ENCODE measurements at regions of chr7 and their contacts with region 1.

Region 1: DNA sequence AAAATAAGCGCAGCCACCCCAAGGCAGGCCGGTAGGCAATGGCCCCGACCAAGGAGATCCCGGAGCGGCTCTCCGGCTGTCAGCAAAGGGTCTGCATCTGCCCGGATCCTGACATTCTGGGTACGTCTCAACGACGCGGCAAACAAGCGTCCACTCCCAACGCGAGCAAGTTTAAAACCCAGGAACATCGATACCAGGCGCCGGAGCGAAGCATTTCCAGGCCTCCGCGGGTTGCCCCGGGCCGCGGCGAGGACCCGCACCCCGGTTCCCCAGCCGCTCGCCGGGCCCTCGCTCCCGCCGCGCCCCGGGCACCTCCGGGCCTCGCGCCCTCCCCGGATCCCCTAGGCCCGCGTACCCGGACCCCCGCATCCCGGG is 453 bp downstream of the URGCP start:
- DNase-seq: peak; percentile 43 to 52
- H3K4me3 ChIP-seq: peak overlapping the region; percentile 81
- H3K4me3 Mint-ChIP-seq: peak overlapping the region; percentile 79
- H3K27ac Mint-ChIP-seq: peak overlapping the region; percentile 86
- H3K4me1 ChIP-seq: peaks cover 21% of the 10 kb centered on the region
- H3K4me1 Mint-ChIP-seq: peaks cover 26% of the 10 kb centered on the region
- H3K27me3 ChIP-seq: no peaks in the 10 kb centered on the region
- H3K27me3 Mint-ChIP-seq: no peaks in the 10 kb centered on the region
- CTCF ChIP-seq: no peak

Region 2: GRCh38 chr7:43869006-43869866 is 36.7 kb before region 1 on chr7 and contains the start of gene MRPS24:
- CTCF ChIA-PET with region 1: no interaction called
- POLR2A ChIA-PET with region 1: interaction called, 14 read pairs
- intact Hi-C with region 1: loop called (anchors 2 kb)
- DNase-seq: peak; percentile 94 to 96
- H3K4me3 ChIP-seq: peak within 1 kb of the TSS; percentile 97
- H3K4me3 Mint-ChIP-seq: peak within 1 kb of the TSS; percentile 92
- H3K27ac Mint-ChIP-seq: peak within 1 kb of the TSS; percentile 87
- H3K4me1 ChIP-seq: peaks cover 13% of the 10 kb centered on the region
- H3K4me1 Mint-ChIP-seq: peaks cover 21% of the 10 kb centered on the region
- H3K27me3 ChIP-seq: no peaks in the 10 kb centered on the region
- H3K27me3 Mint-ChIP-seq: no peaks in the 10 kb centered on the region
- CTCF ChIP-seq: no peak
- total RNA-seq, gene MRPS24: 143 and 150 TPM in 2 replicates

Region 3: DNA sequence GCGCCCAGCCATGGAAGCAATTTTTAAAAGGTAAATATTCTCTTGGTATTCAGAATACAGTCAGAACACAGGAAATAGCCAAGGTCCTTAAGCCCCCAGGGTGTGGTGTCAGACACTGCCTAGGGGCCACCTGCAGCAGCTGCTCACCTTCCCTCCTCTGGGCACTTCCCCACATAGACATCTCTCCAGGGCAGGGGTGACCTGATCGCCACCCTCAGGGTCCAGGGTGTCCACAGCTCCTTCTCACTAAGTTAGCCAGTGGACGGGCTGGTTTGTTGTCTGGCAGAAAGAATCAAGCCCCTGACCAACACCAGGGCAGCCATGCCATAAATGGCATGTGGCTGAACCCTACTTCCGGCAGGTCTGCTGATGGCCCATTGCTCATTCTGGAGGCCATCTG is 15.4 kb before region 1 on chr7:
- CTCF ChIA-PET with region 1: no interaction called
- POLR2A ChIA-PET with region 1: no interaction called
- intact Hi-C with region 1: loop called (anchors 1 kb)
- DNase-seq: no peak
- H3K4me3 ChIP-seq: no peak overlapping the region
- H3K4me3 Mint-ChIP-seq: no peak overlapping the region
- H3K27ac Mint-ChIP-seq: no peak overlapping the region
- H3K4me1 ChIP-seq: peaks cover 10% of the 10 kb centered on the region
- H3K4me1 Mint-ChIP-seq: peaks cover 8% of the 10 kb centered on the region
- H3K27me3 ChIP-seq: no peaks in the 10 kb centered on the region
- H3K27me3 Mint-ChIP-seq: no peaks in the 10 kb centered on the region
- CTCF ChIP-seq: no peak

Region 4: DNA sequence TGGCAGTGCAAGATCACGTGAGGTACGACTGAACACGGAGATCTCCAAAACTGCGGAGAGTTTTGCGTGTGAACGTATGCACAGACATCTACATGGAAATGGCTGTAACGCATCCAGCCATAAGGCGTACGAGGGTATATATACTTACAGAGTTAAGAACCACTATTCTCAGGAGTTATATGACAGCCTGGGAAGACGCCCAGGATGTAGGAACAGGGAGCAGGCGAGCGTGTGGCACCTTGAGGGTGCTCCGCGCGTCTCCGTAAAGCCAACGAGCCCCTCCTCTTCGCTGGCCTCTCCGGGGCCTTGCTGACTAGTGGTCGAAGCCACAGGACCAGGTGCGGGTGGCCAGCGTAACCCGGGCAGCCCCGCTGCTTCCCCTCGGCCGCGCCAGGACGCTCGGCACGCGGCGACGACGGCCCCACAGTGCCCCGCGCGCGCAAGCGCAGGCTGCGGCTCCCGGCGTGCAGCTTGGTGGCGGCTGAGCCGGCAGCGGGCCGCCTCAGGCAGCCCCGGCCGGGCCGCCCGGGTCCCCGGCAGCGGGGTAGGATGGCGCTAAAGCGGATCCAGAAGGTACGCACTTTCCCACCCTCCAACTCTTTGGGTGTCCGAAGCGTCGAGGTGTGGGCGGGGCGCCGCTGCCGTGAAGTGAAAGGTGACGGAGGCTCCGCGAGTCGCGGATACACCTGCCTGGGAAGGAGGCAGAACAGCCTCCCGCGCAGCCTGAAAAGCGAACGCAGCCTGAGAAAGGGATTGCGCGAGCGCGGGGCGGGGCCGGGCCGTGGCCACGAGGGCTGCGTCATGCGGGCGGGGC is 20.2 kb after region 1 on chr7 and contains the start of gene UBE2D4:
- CTCF ChIA-PET with region 1: interaction called, 4 read pairs
- POLR2A ChIA-PET with region 1: interaction called, 7 read pairs
- intact Hi-C with region 1: loop called (anchors 1 kb)
- DNase-seq: peak; percentile 92 to 94
- H3K4me3 ChIP-seq: peak within 1 kb of the TSS; percentile 68
- H3K4me3 Mint-ChIP-seq: peak within 1 kb of the TSS; percentile 84
- H3K27ac Mint-ChIP-seq: peak within 1 kb of the TSS; percentile 69
- H3K4me1 ChIP-seq: no peaks in the 10 kb centered on the region
- H3K4me1 Mint-ChIP-seq: no peaks in the 10 kb centered on the region
- H3K27me3 ChIP-seq: no peaks in the 10 kb centered on the region
- H3K27me3 Mint-ChIP-seq: no peaks in the 10 kb centered on the region
- CTCF ChIP-seq: no peak
- total RNA-seq, gene UBE2D4: 12.7 and 15.4 TPM in 2 replicates

Region 5: DNA sequence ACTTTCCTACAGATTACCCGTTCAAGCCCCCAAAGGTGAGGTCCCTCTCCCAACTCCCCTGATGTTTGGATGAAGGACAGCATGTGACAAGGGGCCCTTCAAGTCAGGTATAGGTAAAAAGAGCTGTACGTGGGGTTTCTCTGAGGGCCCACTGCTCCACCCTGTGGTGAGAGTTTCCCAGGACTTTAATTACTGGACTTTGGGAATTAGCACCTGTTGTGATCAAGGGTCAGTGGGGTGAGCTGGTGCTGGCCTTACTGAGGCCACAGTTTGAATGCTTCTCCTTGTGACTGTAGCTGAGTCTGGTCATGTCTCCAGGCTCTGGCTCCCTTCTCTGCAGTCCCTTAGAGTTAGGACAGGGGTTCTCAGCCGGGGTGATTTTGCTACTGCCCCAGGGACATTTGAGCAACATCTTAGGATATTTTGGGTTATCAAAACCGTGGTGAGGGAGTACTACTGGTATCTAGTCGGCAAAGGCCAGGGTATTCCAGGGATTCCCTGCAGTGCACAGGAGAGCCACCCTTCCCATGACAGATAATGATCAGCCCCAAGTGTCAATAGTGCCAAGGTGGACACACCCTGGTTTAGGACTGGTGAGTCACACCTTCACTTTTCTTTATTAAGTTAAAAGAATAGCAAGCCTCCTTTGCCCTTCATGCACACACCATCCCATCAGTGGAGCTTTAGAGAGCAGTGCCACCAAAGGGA is 37.2 kb after region 1 on chr7:
- CTCF ChIA-PET with region 1: interaction called, 13 read pairs
- POLR2A ChIA-PET with region 1: interaction called, 3 read pairs
- intact Hi-C with region 1: loop called (anchors 1 kb)
- DNase-seq: peak; percentile 44
- H3K4me3 ChIP-seq: no peak overlapping the region
- H3K4me3 Mint-ChIP-seq: no peak overlapping the region
- H3K27ac Mint-ChIP-seq: peak overlapping the region; percentile 26
- H3K4me1 ChIP-seq: no peaks in the 10 kb centered on the region
- H3K4me1 Mint-ChIP-seq: peaks cover 10% of the 10 kb centered on the region
- H3K27me3 ChIP-seq: no peaks in the 10 kb centered on the region
- H3K27me3 Mint-ChIP-seq: no peaks in the 10 kb centered on the region
- CTCF ChIP-seq: peak in 1 of 2 experiments; percentile 61

Region 6: GRCh38 chr7:43954524-43955228 is 48.7 kb after region 1 on chr7:
- CTCF ChIA-PET with region 1: interaction called, 10 read pairs
- POLR2A ChIA-PET with region 1: no interaction called
- intact Hi-C with region 1: loop called (anchors 2 kb)
- DNase-seq: peak; percentile 56 to 66
- H3K4me3 ChIP-seq: no peak overlapping the region
- H3K4me3 Mint-ChIP-seq: no peak overlapping the region
- H3K27ac Mint-ChIP-seq: no peak overlapping the region
- H3K4me1 ChIP-seq: no peaks in the 10 kb centered on the region
- H3K4me1 Mint-ChIP-seq: no peaks in the 10 kb centered on the region
- H3K27me3 ChIP-seq: no peaks in the 10 kb centered on the region
- H3K27me3 Mint-ChIP-seq: no peaks in the 10 kb centered on the region
- CTCF ChIP-seq: peak; percentile 51 to 74

Region 7: DNA sequence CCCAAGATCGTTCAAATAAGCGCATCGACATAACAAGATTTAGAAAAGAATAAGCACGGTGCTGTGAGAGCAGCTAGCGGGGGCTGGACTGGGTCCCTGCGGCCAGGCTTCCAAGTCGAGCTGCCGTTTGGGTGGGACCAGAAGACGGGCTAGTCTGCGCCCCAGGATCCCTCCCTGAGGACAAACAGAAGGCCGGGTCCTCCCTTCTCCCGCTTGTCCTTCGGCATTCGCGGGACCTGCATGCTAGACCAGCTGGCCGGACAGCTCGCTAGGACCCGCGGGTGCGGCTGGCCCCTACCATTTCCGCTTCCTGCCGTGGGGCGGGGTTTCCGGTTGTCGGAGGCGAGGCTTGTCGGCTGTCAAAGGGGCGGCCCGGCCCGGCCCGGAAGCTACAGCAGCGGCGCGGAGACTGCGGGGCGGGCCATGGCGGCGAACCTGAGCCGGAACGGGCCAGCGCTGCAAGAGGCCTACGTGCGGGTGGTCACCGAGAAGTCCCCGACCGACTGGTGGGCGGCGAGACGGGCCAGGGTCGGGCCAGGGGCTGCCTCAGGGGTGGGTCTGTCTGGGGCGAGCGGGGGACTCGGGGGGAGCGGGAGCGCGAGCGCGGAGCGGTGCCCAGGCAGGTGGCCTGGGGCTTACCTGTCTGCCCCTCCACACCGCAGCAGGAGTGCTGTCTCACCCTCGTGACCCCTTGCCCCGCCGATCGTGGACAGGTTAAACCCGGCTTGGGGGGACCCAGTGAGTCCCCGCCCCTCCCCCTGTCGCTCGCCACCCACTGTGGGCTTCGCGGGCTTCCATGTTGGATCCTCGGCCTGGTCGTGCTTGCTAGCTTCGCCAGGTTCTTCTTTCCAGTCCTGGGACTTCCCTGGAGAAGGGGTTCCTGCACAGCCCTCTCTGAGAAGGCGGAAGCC is 138.6 kb after region 1 on chr7 and contains the start of gene DBNL:
- CTCF ChIA-PET with region 1: no interaction called
- POLR2A ChIA-PET with region 1: no interaction called
- intact Hi-C with region 1: no loop called
- DNase-seq: peak; percentile 94 to 97
- H3K4me3 ChIP-seq: peak within 1 kb of the TSS; percentile 87
- H3K4me3 Mint-ChIP-seq: peak within 1 kb of the TSS; percentile 87
- H3K27ac Mint-ChIP-seq: peak within 1 kb of the TSS; percentile 73
- H3K4me1 ChIP-seq: peaks cover 4% of the 10 kb centered on the region; the same call in 1 of the 2 replicates
- H3K4me1 Mint-ChIP-seq: peaks cover 16% of the 10 kb centered on the region
- H3K27me3 ChIP-seq: no peaks in the 10 kb centered on the region
- H3K27me3 Mint-ChIP-seq: no peaks in the 10 kb centered on the region
- CTCF ChIP-seq: no peak
- total RNA-seq, gene DBNL: 83.2 and 85.5 TPM in 2 replicates